Endothelial cell of umbilical vein (primary cell): ENCODE measurements at regions of chr3 and their contacts with region 1.

Region 1: GRCh38 chr3:114152519-114153151 is 26.2 kb downstream of the DRD3 start:
- DNase-seq: peak; percentile 83
- H3K4me3 ChIP-seq: peak overlapping the region in 2 of 3 experiments; percentile 9 to 31
- H3K27ac ChIP-seq: no peak overlapping the region
- H3K4me1 ChIP-seq: peaks cover 4% of the 10 kb centered on the region
- H3K27me3 ChIP-seq: no peaks in the 10 kb centered on the region
- CTCF ChIP-seq: peak; percentile 89 to 91
- POLR2A ChIP-seq: no peak

Region 2: DNA sequence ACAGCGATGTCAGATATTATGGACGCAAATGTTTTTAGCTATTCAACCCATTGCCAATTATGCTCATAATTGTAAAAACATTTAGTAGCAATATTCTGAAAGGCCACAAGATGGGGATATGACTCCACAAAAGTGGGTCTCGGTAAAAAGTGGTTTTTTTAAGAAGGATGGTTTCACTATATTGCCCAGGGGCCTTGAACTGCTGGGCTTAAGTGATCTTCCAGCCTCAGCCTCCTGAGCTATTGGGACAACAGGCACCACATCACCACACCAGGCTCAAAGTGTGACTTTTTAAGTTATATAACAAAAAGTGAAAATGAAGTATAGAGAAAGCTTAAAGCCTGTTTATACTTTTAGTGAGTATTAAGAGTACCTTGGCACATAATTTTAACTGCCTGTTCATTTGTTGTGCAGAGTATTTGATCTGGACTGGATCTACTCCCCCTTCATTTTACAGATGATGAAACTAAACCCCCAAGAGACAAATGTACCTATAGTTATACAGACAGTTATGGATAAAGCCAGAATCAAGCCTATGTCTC is 416.0 kb before region 1 on chr3:
- CTCF ChIA-PET with region 1: interaction called, 111 read pairs
- POLR2A ChIA-PET with region 1: no interaction called
- dilution Hi-C with region 1: no loop called
- intact Hi-C with region 1: loop called (anchors 1 kb)
- DNase-seq: peak; percentile 79
- H3K4me3 ChIP-seq: no peak overlapping the region
- H3K27ac ChIP-seq: no peak overlapping the region
- H3K4me1 ChIP-seq: peaks cover 10% of the 10 kb centered on the region
- H3K27me3 ChIP-seq: no peaks in the 10 kb centered on the region
- CTCF ChIP-seq: peak; percentile 28 to 47
- POLR2A ChIP-seq: no peak

Region 3: DNA sequence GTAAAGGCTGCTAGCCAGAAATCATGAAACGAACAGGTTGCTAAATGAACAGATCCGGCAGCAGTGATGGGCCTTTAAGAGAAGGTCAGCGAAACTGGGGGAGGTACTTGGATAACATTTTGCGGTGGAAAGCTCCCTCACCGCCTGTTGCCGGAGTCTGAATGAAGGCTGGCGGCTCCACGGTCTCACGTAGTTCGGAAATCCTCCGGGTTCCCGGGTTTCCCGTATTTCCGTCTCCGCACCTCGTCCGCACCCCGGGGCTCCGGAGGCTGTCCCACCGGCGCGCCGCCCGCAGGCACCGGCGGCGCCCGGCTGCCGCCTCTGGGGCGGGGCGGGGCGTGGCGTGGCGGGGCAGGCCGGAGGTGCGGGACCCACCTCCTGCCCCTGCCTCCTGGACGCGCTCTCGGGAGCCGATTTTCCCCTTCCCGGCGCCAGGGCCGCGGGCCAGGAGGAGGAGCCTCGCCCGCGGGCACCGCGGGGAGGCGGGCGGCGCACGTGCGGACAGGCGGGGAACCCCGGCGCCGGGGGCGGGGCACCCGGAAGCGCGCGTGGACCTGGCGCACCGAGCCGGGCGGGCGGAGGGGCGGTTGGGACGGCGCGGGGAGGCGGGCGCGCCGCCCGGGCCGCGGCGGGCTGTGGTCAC is 205.1 kb before region 1 on chr3 and contains the start of gene ZDHHC23:
- CTCF ChIA-PET with region 1: interaction called, 3 read pairs
- POLR2A ChIA-PET with region 1: no interaction called
- dilution Hi-C with region 1: no loop called
- intact Hi-C with region 1: loop called (anchors 10 kb)
- DNase-seq: peak; percentile 36
- H3K4me3 ChIP-seq: peak within 1 kb of the TSS; percentile 4 to 63 (median 61)
- H3K27ac ChIP-seq: no peak within 1 kb of the TSS
- H3K4me1 ChIP-seq: peaks cover 7% of the 10 kb centered on the region
- H3K27me3 ChIP-seq: no peaks in the 10 kb centered on the region
- CTCF ChIP-seq: no peak
- POLR2A ChIP-seq: no peak
- total RNA-seq, gene ZDHHC23: 1.9 and 3.2 TPM in 2 replicates

Region 4: GRCh38 chr3:114005481-114005880 is 147.2 kb before region 1 on chr3:
- CTCF ChIA-PET with region 1: no interaction called
- POLR2A ChIA-PET with region 1: no interaction called
- dilution Hi-C with region 1: no loop called
- intact Hi-C with region 1: no loop called
- DNase-seq: no peak
- H3K4me3 ChIP-seq: no peak overlapping the region
- H3K27ac ChIP-seq: no peak overlapping the region
- H3K4me1 ChIP-seq: no peaks in the 10 kb centered on the region
- H3K27me3 ChIP-seq: no peaks in the 10 kb centered on the region
- CTCF ChIP-seq: no peak
- POLR2A ChIP-seq: no peak

Region 5: GRCh38 chr3:114093596-114093995 is 59.0 kb before region 1 on chr3:
- CTCF ChIA-PET with region 1: interaction called, 15 read pairs
- POLR2A ChIA-PET with region 1: no interaction called
- dilution Hi-C with region 1: no loop called
- intact Hi-C with region 1: loop called (anchors 1 kb)
- DNase-seq: peak; percentile 65
- H3K4me3 ChIP-seq: no peak overlapping the region
- H3K27ac ChIP-seq: peak overlapping the region; percentile 86
- H3K4me1 ChIP-seq: peaks cover 26% of the 10 kb centered on the region
- H3K27me3 ChIP-seq: no peaks in the 10 kb centered on the region
- CTCF ChIP-seq: no peak
- POLR2A ChIP-seq: no peak

Region 6: GRCh38 chr3:114213627-114214541 is 61.2 kb after region 1 on chr3:
- CTCF ChIA-PET with region 1: interaction called, 8 read pairs
- POLR2A ChIA-PET with region 1: no interaction called
- dilution Hi-C with region 1: no loop called
- intact Hi-C with region 1: loop called (anchors 2 kb)
- DNase-seq: peak; percentile 82
- H3K4me3 ChIP-seq: peak overlapping the region in 2 of 3 experiments; percentile 27 to 29
- H3K27ac ChIP-seq: peak overlapping the region; percentile 70
- H3K4me1 ChIP-seq: peaks cover 47% of the 10 kb centered on the region
- H3K27me3 ChIP-seq: no peaks in the 10 kb centered on the region
- CTCF ChIP-seq: no peak
- POLR2A ChIP-seq: no peak

Region 7: DNA sequence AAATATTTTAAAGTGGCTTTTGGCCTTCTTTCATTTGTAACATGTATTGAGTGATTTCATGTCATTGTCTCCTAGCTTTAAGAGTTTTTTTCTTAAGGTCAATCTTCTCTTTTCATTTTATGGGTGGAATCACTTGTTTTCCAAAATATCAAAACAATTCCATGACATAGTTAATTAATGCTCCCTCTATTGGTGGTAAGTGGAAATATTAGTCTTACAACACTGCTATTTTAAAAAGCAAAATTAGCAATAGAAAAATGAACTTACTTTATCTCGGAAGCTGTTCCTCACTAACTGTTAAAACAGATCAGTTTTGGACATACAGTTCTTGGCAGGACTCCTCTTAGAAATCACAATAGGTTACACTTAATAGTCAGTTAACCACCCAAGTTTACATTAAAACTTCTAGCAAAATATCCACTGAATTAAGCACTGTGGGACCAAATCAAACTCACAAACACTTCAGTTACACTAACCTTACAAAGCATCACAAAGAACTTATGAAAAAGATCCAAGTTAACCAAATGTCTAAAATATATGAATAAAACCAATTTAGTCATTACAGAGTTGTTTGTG is 183.6 kb after region 1 on chr3:
- CTCF ChIA-PET with region 1: no interaction called
- POLR2A ChIA-PET with region 1: no interaction called
- dilution Hi-C with region 1: no loop called
- intact Hi-C with region 1: loop called (anchors 1 kb)
- DNase-seq: peak; percentile 18
- H3K4me3 ChIP-seq: no peak overlapping the region
- H3K27ac ChIP-seq: no peak overlapping the region
- H3K4me1 ChIP-seq: no peaks in the 10 kb centered on the region
- H3K27me3 ChIP-seq: no peaks in the 10 kb centered on the region
- CTCF ChIP-seq: peak; percentile 15 to 31
- POLR2A ChIP-seq: no peak